Ovary (tissue), 10 donors: ENCODE measurements at regions of chr9 and their contacts with region 1.

Region 1: DNA sequence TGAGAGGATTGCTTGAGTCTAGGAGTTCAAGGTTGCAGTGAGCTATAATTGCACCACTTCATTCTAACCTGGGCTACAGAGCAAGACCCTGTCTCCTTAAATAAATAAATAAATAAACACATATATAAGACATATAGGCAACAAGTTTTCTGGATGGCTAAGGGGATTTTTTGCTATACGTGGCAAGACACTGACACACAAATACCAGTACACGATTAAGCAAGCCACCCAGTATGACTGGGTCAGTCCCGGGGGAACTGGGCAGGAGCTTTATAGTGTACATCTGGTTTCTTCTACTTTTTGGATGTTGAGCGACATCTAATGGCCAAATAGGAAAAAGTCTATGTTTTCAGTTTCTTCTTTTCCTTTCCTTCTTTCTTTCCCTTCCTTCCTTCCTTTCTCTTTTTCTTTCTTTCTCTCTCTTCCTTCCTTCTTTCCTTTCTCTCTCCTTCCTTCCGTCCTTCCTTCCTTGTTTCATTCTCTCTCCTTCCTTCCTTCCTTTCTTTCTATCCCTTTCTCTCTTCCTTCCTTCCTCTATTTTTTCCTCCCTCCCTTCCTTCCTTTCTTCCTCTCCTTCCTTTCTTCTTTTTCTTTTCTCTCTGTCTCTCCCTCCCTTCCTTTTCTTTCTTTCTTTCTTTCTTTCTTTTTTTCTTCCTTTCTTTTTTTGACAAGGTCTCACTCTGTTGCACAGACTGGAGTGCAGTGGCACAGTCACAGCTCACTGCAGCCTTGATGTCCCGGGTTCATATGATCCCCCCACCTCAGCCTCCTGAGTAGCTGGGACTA is 47.0 kb upstream of the PLIN2 start:
- DNase-seq: peak in 4 of 5 donors; percentile 46 to 78 (median 52)
- H3K4me3 ChIP-seq: no peak overlapping the region
- H3K27ac ChIP-seq: no peak overlapping the region
- H3K4me1 ChIP-seq: no peaks in the 10 kb centered on the region
- H3K27me3 ChIP-seq: no peaks in the 10 kb centered on the region
- CTCF ChIP-seq: peak; percentile 33 to 65 (median 42)
- EP300 ChIP-seq: no peak
- POLR2A ChIP-seq: no peak

Region 2: DNA sequence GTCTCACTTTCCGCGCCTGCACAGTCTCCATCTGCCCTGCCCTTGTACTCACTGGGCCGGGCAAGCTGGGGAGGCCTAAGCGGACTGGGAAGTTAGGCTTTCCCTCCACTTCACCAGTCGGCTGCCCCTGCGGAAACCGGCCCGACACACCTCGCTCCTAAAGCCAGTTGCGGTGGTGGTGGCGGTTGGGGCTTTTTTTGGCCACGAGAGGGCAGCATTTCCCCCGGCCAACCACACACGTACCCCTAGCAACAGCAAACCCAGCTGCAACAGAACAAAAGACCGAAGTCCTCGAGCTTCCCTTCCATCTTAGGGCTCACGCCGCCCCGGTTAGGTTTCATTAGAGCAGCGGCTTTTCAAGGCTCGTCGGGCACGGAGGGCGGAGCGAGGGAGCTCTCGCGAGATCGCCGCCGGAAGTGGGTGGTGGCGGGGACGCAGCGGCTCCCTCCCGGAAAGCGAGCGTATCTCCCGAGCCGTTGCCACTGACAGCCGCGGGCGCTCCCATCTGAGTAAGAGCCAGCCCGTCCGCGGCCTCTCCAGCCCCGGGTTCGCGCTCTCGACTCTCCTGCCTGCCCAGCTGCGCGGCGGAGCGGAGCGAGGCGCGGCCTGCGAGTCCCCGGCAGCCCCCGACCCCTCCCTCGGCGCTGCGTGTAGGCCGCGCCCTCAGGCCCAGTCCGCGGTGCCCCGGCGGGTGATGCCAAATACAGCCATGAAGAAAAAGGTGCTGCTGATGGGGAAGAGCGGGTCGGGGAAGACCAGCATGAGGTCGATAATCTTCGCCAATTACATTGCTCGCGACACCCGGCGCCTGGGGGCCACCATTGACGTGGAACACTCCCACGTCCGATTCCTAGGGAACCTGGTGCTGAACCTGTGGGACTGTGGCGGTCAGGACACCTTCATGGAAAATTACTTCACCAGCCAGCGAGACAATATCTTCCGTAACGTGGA is 125.1 kb before region 1 on chr9 and contains the start of gene RRAGA:
- intact Hi-C with region 1: loop called in 3 of 4 experiments (anchors 5 to 10 kb)
- DNase-seq: peak; percentile 94 to 98 (median 96)
- H3K4me3 ChIP-seq: peak within 1 kb of the TSS; percentile 73
- H3K27ac ChIP-seq: peak within 1 kb of the TSS; percentile 95 to 96
- H3K4me1 ChIP-seq: peaks cover 10% of the 10 kb centered on the region
- H3K27me3 ChIP-seq: no peaks in the 10 kb centered on the region
- CTCF ChIP-seq: peak; percentile 94 to 96 (median 94)
- EP300 ChIP-seq: no peak
- POLR2A ChIP-seq: peak; percentile 85
- total RNA-seq, gene RRAGA: 36.6 to 111 (median 104) TPM

Region 3: GRCh38 chr9:19127881-19128500 is 46.3 kb before region 1 on chr9:
- intact Hi-C with region 1: loop called (anchors 5 to 10 kb)
- DNase-seq: peak; percentile 32 to 57 (median 46)
- H3K4me3 ChIP-seq: peak overlapping the region; percentile 90
- H3K27ac ChIP-seq: peak overlapping the region; percentile 92 to 94
- H3K4me1 ChIP-seq: peaks cover 2% of the 10 kb centered on the region
- H3K27me3 ChIP-seq: no peaks in the 10 kb centered on the region
- CTCF ChIP-seq: no peak
- EP300 ChIP-seq: no peak
- POLR2A ChIP-seq: no peak